Naive thymus-derived CD4-positive, alpha-beta T cell (primary cell): ENCODE measurements at regions of chr4 and their contacts with region 1.

Region 1: DNA sequence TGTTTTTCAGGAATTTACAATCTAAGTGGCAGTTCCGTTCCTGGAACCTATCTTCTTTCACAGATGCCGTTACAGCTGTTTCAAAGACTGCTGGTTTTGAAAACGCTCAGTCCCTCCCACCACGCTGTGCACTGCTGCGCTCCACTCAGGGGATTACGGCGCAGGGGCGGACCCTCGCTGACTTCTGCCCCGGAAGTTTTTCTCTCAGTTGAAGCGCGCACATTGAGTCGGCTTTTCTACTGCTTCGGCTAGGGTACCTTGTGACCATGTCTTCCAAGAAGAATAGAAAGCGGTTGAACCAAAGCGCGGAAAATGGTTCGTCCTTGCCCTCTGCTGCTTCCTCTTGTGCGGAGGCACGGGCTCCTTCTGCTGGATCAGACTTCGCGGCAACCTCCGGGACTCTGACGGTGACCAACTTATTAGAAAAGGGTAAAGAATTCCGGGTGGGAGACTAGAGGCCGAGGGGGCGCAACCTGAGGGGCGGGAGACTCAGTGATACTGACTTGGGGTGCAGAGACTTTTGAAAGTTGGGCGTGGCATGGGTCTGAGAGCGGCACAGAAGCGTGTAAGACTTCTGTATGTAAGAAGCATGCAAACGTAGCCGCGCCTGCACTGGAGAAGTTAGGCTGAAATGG is 597 bp upstream of the NUDT6 start:
- DNase-seq: peak; percentile 60 to 87 (median 82)
- ATAC-seq: peak; percentile 98
- H3K4me3 ChIP-seq: peak overlapping the region; percentile 97
- H3K4me3 Mint-ChIP-seq: peak overlapping the region in 6 of 10 donors; percentile 98 to 100 (median 98)
- H3K27ac ChIP-seq: peak overlapping the region; percentile 68
- H3K27ac Mint-ChIP-seq: peak overlapping the region in 8 of 9 donors; percentile 92 to 98 (median 96)
- H3K4me1 ChIP-seq: peaks cover 11 to 12% of the 10 kb centered on the region in 2 donors
- H3K4me1 Mint-ChIP-seq: peaks cover 0 to 33% (median 7%) of the 10 kb centered on the region in 7 donors
- H3K27me3 ChIP-seq: no peaks in the 10 kb centered on the region
- H3K27me3 Mint-ChIP-seq: no peaks in the 10 kb centered on the region

Region 2: GRCh38 chr4:121800961-121801714 is 1121.9 kb before region 1 on chr4 and contains the start of gene EXOSC9:
- CTCF ChIA-PET with region 1: no interaction called
- POLR2A ChIA-PET with region 1: no interaction called
- intact Hi-C with region 1: loop called in 1 of 2 experiments (anchors 1 kb)
- DNase-seq: peak; percentile 88 to 98 (median 95)
- ATAC-seq: peak; percentile 92
- H3K4me3 ChIP-seq: peak within 1 kb of the TSS; percentile 92
- H3K4me3 Mint-ChIP-seq: peak within 1 kb of the TSS; percentile 89 to 99 (median 95)
- H3K27ac ChIP-seq: peak within 1 kb of the TSS; percentile 93
- H3K27ac Mint-ChIP-seq: peak within 1 kb of the TSS; percentile 97 to 100 (median 99)
- H3K4me1 ChIP-seq: peaks cover 16 to 20% of the 10 kb centered on the region in 2 donors
- H3K4me1 Mint-ChIP-seq: peaks cover 26 to 55% (median 50%) of the 10 kb centered on the region in 7 donors
- H3K27me3 ChIP-seq: no peaks in the 10 kb centered on the region
- H3K27me3 Mint-ChIP-seq: peaks cover 0 to 2% (median 0%) of the 10 kb centered on the region in 5 donors
- total RNA-seq, gene EXOSC9: 37.5 to 55.0 (median 44.2) TPM

Region 3: GRCh38 chr4:122151982-122152710 is 770.8 kb before region 1 on chr4 and contains the start of gene BLTP1:
- CTCF ChIA-PET with region 1: no interaction called
- POLR2A ChIA-PET with region 1: no interaction called
- intact Hi-C with region 1: loop called (anchors 1 to 2 kb)
- DNase-seq: peak; percentile 81 to 92 (median 87)
- ATAC-seq: peak; percentile 95
- H3K4me3 ChIP-seq: peak within 1 kb of the TSS; percentile 96
- H3K4me3 Mint-ChIP-seq: peak within 1 kb of the TSS; percentile 79 to 98 (median 98)
- H3K27ac ChIP-seq: peak within 1 kb of the TSS; percentile 85
- H3K27ac Mint-ChIP-seq: peak within 1 kb of the TSS; percentile 90 to 100 (median 97)
- H3K4me1 ChIP-seq: peaks cover 22 to 28% of the 10 kb centered on the region in 2 donors
- H3K4me1 Mint-ChIP-seq: peaks cover 41 to 84% (median 72%) of the 10 kb centered on the region in 7 donors
- H3K27me3 ChIP-seq: no peaks in the 10 kb centered on the region
- H3K27me3 Mint-ChIP-seq: no peaks in the 10 kb centered on the region
- total RNA-seq, gene BLTP1: 45.9 to 86.6 (median 72.8) TPM

Region 4: DNA sequence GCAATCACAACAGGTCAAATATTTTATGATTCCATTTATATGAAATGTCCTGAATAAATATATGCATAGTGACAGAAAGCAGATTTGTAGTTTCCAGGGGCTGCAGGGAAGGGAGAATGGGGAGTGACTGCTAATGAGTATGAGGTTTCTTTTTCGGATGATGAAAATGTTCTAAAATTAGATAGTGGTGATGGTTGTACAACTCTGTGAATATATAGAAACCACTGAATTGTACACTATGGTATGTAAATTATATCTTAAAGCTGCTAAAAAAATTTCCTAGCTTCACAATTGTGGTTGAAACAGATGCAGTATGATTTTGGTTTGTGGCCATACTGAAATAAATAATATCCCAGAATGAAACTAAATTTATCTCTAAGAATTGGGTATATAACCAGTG is 453.5 kb before region 1 on chr4:
- CTCF ChIA-PET with region 1: no interaction called
- POLR2A ChIA-PET with region 1: no interaction called
- intact Hi-C with region 1: no loop called
- DNase-seq: no peak
- ATAC-seq: no peak
- H3K4me3 ChIP-seq: no peak overlapping the region
- H3K4me3 Mint-ChIP-seq: no peak overlapping the region
- H3K27ac ChIP-seq: no peak overlapping the region
- H3K27ac Mint-ChIP-seq: no peak overlapping the region
- H3K4me1 ChIP-seq: no peaks in the 10 kb centered on the region
- H3K4me1 Mint-ChIP-seq: peaks cover 0 to 3% (median 0%) of the 10 kb centered on the region in 7 donors
- H3K27me3 ChIP-seq: no peaks in the 10 kb centered on the region
- H3K27me3 Mint-ChIP-seq: peaks cover 0 to 7% (median 0%) of the 10 kb centered on the region in 5 donors

Region 5: GRCh38 chr4:122602277-122603142 is 320.5 kb before region 1 on chr4:
- CTCF ChIA-PET with region 1: no interaction called
- POLR2A ChIA-PET with region 1: no interaction called
- intact Hi-C with region 1: loop called in 1 of 2 experiments (anchors 2 kb)
- DNase-seq: peak in 5 of 9 donors; percentile 13 to 33 (median 24)
- ATAC-seq: peak; percentile 42
- H3K4me3 ChIP-seq: no peak overlapping the region
- H3K4me3 Mint-ChIP-seq: peak overlapping the region in 6 of 10 donors; percentile 3 to 39 (median 26)
- H3K27ac ChIP-seq: no peak overlapping the region
- H3K27ac Mint-ChIP-seq: peak overlapping the region in 2 of 9 donors; percentile 10 to 29
- H3K4me1 ChIP-seq: no peaks in the 10 kb centered on the region
- H3K4me1 Mint-ChIP-seq: peaks cover 0 to 26% (median 5%) of the 10 kb centered on the region in 7 donors
- H3K27me3 ChIP-seq: no peaks in the 10 kb centered on the region
- H3K27me3 Mint-ChIP-seq: peaks cover 0 to 19% (median 0%) of the 10 kb centered on the region in 5 donors

Region 6: GRCh38 chr4:122758033-122758432 is 165.0 kb before region 1 on chr4:
- CTCF ChIA-PET with region 1: interaction called, 5 read pairs
- POLR2A ChIA-PET with region 1: no interaction called
- intact Hi-C with region 1: loop called in 1 of 2 experiments (anchors 2 kb)
- DNase-seq: peak in 5 of 9 donors; percentile 16 to 31 (median 21)
- ATAC-seq: peak; percentile 57
- H3K4me3 ChIP-seq: no peak overlapping the region
- H3K4me3 Mint-ChIP-seq: no peak overlapping the region
- H3K27ac ChIP-seq: no peak overlapping the region
- H3K27ac Mint-ChIP-seq: no peak overlapping the region
- H3K4me1 ChIP-seq: peaks cover 0 to 9% of the 10 kb centered on the region in 2 donors
- H3K4me1 Mint-ChIP-seq: peaks cover 0 to 24% (median 12%) of the 10 kb centered on the region in 7 donors
- H3K27me3 ChIP-seq: peaks cover 0 to 3% of the 10 kb centered on the region in 2 donors
- H3K27me3 Mint-ChIP-seq: peaks cover 0 to 24% (median 18%) of the 10 kb centered on the region in 5 donors